Right ventricle myocardium inferior (tissue), 1 donor: ENCODE measurements at regions of chr9 and their contacts with region 1.

Region 1: GRCh38 chr9:98074115-98074990 is 17.8 kb downstream of the NANS start:
- DNase-seq: no peak
- ATAC-seq: peak; percentile 56

Region 2: DNA sequence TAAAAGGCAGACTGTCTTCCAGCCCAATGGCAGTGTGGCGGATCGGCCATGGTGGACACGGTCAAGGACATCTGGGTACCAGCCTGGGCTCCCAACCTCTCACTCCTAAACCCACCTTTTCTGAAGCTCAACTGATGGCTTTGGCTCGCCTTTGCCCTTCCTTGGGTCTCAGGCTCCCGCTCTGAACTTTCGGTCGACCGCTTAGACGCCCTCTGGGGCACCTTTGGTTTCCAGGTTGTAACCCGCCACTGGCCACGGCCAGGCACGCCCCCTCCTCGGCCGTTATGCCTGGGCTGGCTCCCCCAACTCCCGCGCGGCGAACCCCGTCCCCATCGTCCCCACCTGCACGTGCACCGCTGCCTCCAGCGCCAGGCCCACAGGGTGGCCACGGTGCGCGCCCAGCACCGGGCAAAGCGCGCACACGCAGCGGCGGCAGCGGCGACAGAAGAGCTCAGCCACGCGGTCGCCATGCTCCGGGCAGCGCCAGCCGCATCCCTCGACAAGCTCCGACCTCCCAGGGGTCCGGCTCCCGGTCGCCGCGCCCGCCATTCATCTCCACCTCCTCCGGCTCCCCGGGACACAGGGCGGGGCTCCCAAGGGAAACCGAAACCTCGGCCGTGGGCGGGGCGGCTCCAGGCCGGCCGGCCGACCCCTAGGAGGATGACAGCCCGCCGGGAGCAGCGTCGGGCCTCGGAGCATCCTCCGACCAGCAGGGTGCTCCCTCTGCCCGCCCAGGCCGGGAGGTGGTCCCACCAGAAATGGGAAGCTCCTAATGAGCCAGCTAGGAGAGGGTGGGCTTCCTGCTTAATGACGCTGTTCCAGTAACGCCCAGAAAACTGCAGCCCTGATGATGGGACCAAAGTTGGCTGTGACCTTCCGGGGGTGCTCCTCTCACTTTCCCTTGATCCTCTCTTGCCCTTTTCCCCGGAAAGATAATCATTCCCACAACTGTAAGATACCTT is 44.6 kb after region 1 on chr9 and contains the start of gene TRIM14:
- intact Hi-C with region 1: loop called (anchors 5 kb)
- DNase-seq: peak; percentile 90
- ATAC-seq: peak; percentile 79
- total RNA-seq, gene TRIM14: 5.1 TPM

Region 3: GRCh38 chr9:98207606-98208005 is 133.3 kb after region 1 on chr9:
- intact Hi-C with region 1: loop called (anchors 10 kb)
- DNase-seq: no peak
- ATAC-seq: no peak